CD8-positive, alpha-beta T cell (primary cell): ENCODE measurements at regions of chr1 and their contacts with region 1.

Region 1: GRCh38 chr1:117067533-117068370 is 7.6 kb downstream of the TTF2 start:
- DNase-seq: peak in 6 of 9 experiments; percentile 23 to 53 (median 39)
- ATAC-seq: peak; percentile 75
- H3K4me3 ChIP-seq: no peak overlapping the region
- H3K4me3 Mint-ChIP-seq: no peak overlapping the region
- H3K27ac ChIP-seq: no peak overlapping the region
- H3K27ac Mint-ChIP-seq: no peak overlapping the region
- H3K4me1 ChIP-seq: no peaks in the 10 kb centered on the region
- H3K4me1 Mint-ChIP-seq: peaks cover 19% of the 10 kb centered on the region
- H3K27me3 ChIP-seq: no peaks in the 10 kb centered on the region
- H3K27me3 Mint-ChIP-seq: no peaks in the 10 kb centered on the region
- CTCF ChIP-seq: peak; percentile 55

Region 2: GRCh38 chr1:116919802-116920201 is 147.9 kb before region 1 on chr1:
- CTCF ChIA-PET with region 1: no interaction called
- POLR2A ChIA-PET with region 1: no interaction called
- intact Hi-C with region 1: no loop called
- DNase-seq: peak in 1 of 9 experiments; percentile 27
- ATAC-seq: no peak
- H3K4me3 ChIP-seq: no peak overlapping the region
- H3K4me3 Mint-ChIP-seq: no peak overlapping the region
- H3K27ac ChIP-seq: no peak overlapping the region
- H3K27ac Mint-ChIP-seq: no peak overlapping the region
- H3K4me1 ChIP-seq: no peaks in the 10 kb centered on the region
- H3K4me1 Mint-ChIP-seq: peaks cover 7% of the 10 kb centered on the region
- H3K27me3 ChIP-seq: no peaks in the 10 kb centered on the region
- H3K27me3 Mint-ChIP-seq: peaks cover 2% of the 10 kb centered on the region
- CTCF ChIP-seq: no peak

Region 3: DNA sequence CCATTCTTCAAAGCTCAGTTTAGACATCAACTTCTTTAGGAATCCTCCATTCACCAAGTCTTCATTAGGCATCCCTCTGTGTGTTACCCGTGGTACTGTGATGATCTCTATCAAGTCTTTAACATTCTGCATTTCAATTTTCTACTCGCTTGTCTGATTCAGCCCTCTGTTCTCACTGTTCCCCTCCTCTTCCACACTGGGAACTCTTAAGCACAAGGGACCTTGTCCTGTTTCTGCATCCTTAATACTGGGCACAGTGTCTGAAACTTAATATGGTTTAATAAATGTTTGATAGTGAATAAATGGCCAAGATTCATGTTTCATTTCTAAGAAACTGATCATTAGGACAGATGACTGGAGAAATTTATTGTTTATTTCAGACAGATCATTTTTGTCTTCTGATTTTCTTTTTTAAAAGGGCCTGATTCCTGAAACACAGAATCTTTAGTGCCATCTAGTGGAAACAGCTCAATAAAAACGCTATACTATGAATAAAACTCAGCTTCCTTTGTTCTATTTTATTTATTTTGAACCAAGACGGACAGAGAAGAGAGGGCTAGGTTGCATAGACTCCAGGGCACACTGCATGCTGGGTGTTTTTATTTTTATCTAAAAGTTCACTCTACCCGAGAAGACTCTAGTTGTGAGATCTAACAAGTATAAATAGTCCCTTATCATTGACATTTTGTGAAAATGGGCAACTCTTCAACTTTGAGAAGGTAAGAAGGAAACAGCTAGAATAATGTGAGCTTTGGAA is 60.7 kb after region 1 on chr1:
- CTCF ChIA-PET with region 1: interaction called, 54 read pairs
- POLR2A ChIA-PET with region 1: no interaction called
- intact Hi-C with region 1: loop called (anchors 1 kb)
- DNase-seq: peak in 2 of 9 experiments; percentile 36 to 55
- ATAC-seq: peak; percentile 38
- H3K4me3 ChIP-seq: no peak overlapping the region
- H3K4me3 Mint-ChIP-seq: no peak overlapping the region
- H3K27ac ChIP-seq: no peak overlapping the region
- H3K27ac Mint-ChIP-seq: no peak overlapping the region
- H3K4me1 ChIP-seq: no peaks in the 10 kb centered on the region
- H3K4me1 Mint-ChIP-seq: peaks cover 2% of the 10 kb centered on the region
- H3K27me3 ChIP-seq: peaks cover 0 to 5% of the 10 kb centered on the region in 2 experiments
- H3K27me3 Mint-ChIP-seq: peaks cover 8% of the 10 kb centered on the region
- CTCF ChIP-seq: peak; percentile 54

Region 4: DNA sequence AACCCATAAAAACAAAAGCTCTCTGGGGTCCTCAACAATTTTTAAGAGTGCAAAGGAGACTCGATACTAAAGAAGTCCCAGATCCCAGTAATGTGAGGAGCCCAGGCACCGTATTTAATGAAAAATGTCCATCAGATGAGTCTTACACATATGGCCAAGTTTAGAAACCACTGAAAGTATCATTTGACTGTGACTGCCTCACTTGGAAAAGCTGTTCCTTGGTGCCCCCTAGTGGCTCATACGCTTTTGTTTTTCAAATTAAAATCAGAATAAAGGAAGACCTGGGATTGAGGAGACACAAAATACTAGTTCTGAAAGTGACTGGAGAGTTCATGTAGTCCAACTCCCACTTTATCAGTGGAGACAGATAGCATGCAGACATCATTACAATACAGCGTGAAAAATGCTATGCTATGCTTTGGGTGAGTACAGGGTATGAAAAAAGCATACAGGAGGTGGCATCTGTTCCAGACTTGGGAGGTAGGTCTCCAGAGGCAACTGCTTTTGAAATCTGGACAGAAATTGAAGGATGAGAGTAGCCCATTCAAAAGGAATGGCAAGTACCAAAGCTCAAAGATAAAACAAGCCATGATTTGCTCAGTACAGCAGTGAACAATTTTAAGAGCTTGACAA is 827.8 kb after region 1 on chr1:
- CTCF ChIA-PET with region 1: no interaction called
- POLR2A ChIA-PET with region 1: no interaction called
- intact Hi-C with region 1: loop called (anchors 2 kb)
- DNase-seq: peak; percentile 11 to 70 (median 54)
- ATAC-seq: peak; percentile 48
- H3K4me3 ChIP-seq: no peak overlapping the region
- H3K4me3 Mint-ChIP-seq: no peak overlapping the region
- H3K27ac ChIP-seq: no peak overlapping the region
- H3K27ac Mint-ChIP-seq: no peak overlapping the region
- H3K4me1 ChIP-seq: no peaks in the 10 kb centered on the region
- H3K4me1 Mint-ChIP-seq: peaks cover 4% of the 10 kb centered on the region
- H3K27me3 ChIP-seq: no peaks in the 10 kb centered on the region
- H3K27me3 Mint-ChIP-seq: no peaks in the 10 kb centered on the region
- CTCF ChIP-seq: peak; percentile 84